ENCODE measurements at regions of chr12 and their contacts with region 1.

Region 1: GRCh38 chr12:6470375-6471163 is at the start of gene VAMP1:
- DNase-seq: peak; percentile 91 to 97
- H3K4me3 ChIP-seq: peak within 1 kb of the TSS; percentile 75 to 87 (median 86)
- H3K27ac ChIP-seq: peak within 1 kb of the TSS; percentile 67; the same call in 1 of the 2 replicates
- H3K4me1 ChIP-seq: peaks cover 3 to 7% (median 3%) of the 10 kb centered on the region in 4 experiments; a peak in 3 of 7 replicates
- H3K27me3 ChIP-seq: no peaks in the 10 kb centered on the region; a peak in 1 of 7 replicates
- CTCF ChIP-seq: no peak
- EP300 ChIP-seq: no peak
- POLR2A ChIP-seq: peak; percentile 99
- RAD21 ChIP-seq: no peak
- total RNA-seq, gene VAMP1: 9.3 and 10.8 TPM in 2 replicates

Region 2: DNA sequence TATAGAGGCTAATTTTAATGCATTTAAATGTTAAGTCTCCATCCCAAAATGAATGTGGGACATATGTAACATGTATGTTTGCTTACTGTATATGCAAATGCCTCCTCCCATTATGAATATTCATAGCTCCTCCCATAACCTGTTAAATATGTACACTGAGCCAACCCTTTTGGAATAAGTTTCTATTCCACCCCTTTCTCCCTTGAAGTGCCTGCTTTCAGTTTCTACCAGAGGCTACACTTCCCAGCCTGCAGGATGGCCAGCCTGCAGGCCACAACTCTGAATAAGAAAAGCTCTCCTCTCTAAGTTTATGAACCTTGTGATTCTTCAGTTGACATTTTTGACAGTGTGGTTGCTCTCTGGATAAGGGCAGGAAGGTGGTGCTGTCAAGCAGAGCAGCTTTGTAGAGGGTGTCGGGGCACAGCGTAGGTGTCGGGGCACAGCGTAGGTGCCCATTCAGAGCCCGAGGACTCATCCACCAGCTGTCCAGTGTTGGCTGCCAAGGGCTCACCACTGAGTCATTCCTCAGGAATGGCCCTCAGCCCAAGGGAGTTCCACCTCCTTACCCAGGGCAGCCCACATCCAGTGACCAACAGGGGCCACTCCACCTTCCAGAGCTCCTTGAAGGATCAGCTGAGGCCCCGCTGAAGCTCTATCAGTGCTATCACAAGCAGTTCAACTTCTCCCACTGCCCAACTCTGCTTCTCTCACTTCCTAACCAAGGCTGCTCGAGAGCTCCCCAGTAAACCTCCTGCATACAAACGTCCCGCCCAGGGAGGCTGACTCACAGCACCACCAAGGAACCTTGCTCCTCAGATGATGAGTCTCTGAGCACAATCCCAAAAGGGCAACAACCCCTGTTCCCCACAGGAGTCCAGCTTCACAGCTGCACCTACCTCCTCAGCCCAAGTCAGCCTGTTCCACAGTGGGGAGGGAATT is 377.5 kb before region 1 on chr12:
- CTCF ChIA-PET with region 1: no interaction called
- POLR2A ChIA-PET with region 1: no interaction called
- DNase-seq: no peak
- H3K4me3 ChIP-seq: no peak overlapping the region
- H3K27ac ChIP-seq: no peak overlapping the region
- H3K4me1 ChIP-seq: peaks cover 0 to 8% (median 2%) of the 10 kb centered on the region in 4 experiments; a peak in 4 of 7 replicates
- H3K27me3 ChIP-seq: peaks cover 0 to 3% (median 0%) of the 10 kb centered on the region in 4 experiments; a peak in 1 of 7 replicates
- CTCF ChIP-seq: no peak
- EP300 ChIP-seq: no peak
- POLR2A ChIP-seq: no peak
- RAD21 ChIP-seq: no peak

Region 3: GRCh38 chr12:6254491-6255157 is 215.9 kb before region 1 on chr12:
- CTCF ChIA-PET with region 1: no interaction called
- POLR2A ChIA-PET with region 1: no interaction called
- DNase-seq: no peak
- H3K4me3 ChIP-seq: no peak overlapping the region
- H3K27ac ChIP-seq: no peak overlapping the region
- H3K4me1 ChIP-seq: no peaks in the 10 kb centered on the region; a peak in 1 of 7 replicates
- H3K27me3 ChIP-seq: no peaks in the 10 kb centered on the region
- CTCF ChIP-seq: no peak
- EP300 ChIP-seq: no peak
- POLR2A ChIP-seq: no peak
- RAD21 ChIP-seq: no peak

Region 4: DNA sequence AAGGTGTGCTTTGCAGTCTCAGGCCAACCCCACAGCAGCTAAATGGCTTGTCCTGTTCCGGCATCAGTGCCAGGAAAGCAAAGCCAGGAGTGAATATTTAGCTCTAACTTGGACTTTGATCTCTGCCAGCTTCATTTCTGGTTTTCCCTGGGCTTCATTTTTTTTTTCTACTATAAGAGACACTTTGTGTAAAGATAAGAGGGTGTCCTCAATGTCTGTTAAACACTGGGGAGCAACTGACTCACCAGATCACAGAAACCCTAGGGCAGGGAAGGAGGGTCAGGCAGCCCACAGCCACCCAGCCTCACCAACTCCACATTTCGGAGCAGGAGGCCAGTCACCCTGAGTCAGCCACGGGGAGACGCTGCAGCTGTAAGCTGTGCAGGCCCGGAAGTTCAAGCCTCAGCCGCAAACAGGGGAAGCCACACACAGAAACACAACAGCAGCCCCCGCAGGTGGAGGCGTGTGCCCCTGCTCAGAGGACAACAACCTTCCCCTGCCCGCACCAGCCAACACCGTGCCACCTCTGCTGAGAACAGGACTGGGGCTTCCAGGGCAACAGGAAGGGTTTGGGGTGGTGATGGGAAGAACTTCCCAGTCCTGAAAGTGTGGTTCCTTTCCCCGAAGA is 135.0 kb before region 1 on chr12:
- CTCF ChIA-PET with region 1: interaction called, 107 read pairs
- POLR2A ChIA-PET with region 1: interaction called, 13 read pairs
- DNase-seq: peak in 1 of 2 experiments; percentile 70
- H3K4me3 ChIP-seq: peak overlapping the region in 3 of 4 experiments; percentile 5 to 51 (median 37); a peak in 4 of 8 replicates
- H3K27ac ChIP-seq: peak overlapping the region; percentile 88
- H3K4me1 ChIP-seq: peaks cover 19 to 48% (median 29%) of the 10 kb centered on the region in 4 experiments
- H3K27me3 ChIP-seq: no peaks in the 10 kb centered on the region
- CTCF ChIP-seq: peak in 2 of 3 experiments; percentile 48 to 53; a peak in 3 of 4 replicates
- EP300 ChIP-seq: no peak
- POLR2A ChIP-seq: no peak
- RAD21 ChIP-seq: peak; percentile 45 to 64

Region 5: DNA sequence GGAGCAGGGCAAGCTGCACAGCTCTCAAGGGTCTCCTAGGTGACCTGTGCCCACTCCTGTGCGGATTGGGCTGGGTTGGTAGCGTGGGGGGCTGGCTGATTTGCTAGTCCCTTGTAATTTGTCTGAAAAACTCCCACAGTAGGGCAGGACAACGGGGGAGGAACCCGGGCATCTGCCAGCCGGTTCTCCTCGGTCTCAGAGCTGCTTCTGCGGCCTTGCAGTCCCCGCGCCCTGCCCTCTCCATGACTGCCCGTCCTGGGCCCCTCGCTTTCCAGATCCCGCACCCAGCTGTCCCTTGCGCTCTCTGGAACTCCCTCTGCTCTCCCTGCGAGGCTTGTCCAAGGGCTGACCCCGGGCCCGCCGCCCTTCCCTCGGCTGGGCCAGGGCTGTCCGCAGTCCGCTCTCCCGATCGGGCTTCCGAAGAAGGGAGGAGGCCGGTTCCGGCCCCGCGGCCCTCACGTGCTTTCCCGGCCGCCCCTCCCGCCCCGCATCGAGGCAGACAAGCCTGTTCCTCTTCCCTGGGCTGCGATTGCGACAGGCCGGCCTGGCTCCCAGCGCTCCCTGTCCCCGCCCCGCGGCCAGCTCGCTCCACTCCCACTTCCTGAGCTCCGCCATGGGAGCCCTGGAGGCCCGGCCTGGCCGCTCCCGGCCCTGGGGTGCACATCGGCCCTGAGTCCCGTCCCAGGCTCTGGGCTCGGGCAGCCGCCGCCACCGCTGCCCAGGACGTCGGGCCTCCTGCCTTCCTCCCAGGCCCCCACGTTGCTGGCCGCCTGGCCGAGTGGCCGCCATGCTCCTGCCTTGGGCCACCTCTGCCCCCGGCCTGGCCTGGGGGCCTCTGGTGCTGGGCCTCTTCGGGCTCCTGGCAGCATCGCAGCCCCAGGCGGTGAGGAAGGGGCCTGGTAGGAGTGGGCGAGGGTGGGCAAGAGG is 86.7 kb before region 1 on chr12 and contains the start of gene LTBR:
- CTCF ChIA-PET with region 1: interaction called, 10 read pairs
- POLR2A ChIA-PET with region 1: interaction called, 8 read pairs
- DNase-seq: peak in 1 of 2 experiments; percentile 85
- H3K4me3 ChIP-seq: peak within 1 kb of the TSS in 1 of 4 experiments; percentile 37; a peak in 2 of 8 replicates
- H3K27ac ChIP-seq: no peak within 1 kb of the TSS
- H3K4me1 ChIP-seq: peaks cover 0 to 27% (median 20%) of the 10 kb centered on the region in 4 experiments; a peak in 6 of 7 replicates
- H3K27me3 ChIP-seq: peaks cover 0 to 26% (median 20%) of the 10 kb centered on the region in 4 experiments; a peak in 6 of 7 replicates
- CTCF ChIP-seq: 0 out of 4 replicates have a peak, but pooled peaks of 1 of the 3 experiments have one; percentile 3
- EP300 ChIP-seq: no peak
- POLR2A ChIP-seq: no peak; a peak in 1 of 3 replicates
- RAD21 ChIP-seq: peak in 1 of 2 experiments; percentile 11; a peak in 1 of 4 replicates
- total RNA-seq, gene LTBR: 6.3 and 6.7 TPM in 2 replicates

Region 6: GRCh38 chr12:6434205-6435140 is 36.1 kb before region 1 on chr12:
- CTCF ChIA-PET with region 1: interaction called, 33 read pairs
- POLR2A ChIA-PET with region 1: interaction called, 23 read pairs
- DNase-seq: no peak
- H3K4me3 ChIP-seq: no peak overlapping the region
- H3K27ac ChIP-seq: no peak overlapping the region
- H3K4me1 ChIP-seq: peaks cover 0 to 8% (median under 1%) of the 10 kb centered on the region in 4 experiments; a peak in 3 of 7 replicates
- H3K27me3 ChIP-seq: no peaks in the 10 kb centered on the region
- CTCF ChIP-seq: peak in 1 of 3 experiments; percentile 2; a peak in 1 of 4 replicates
- EP300 ChIP-seq: no peak
- POLR2A ChIP-seq: no peak
- RAD21 ChIP-seq: no peak

Region 7: DNA sequence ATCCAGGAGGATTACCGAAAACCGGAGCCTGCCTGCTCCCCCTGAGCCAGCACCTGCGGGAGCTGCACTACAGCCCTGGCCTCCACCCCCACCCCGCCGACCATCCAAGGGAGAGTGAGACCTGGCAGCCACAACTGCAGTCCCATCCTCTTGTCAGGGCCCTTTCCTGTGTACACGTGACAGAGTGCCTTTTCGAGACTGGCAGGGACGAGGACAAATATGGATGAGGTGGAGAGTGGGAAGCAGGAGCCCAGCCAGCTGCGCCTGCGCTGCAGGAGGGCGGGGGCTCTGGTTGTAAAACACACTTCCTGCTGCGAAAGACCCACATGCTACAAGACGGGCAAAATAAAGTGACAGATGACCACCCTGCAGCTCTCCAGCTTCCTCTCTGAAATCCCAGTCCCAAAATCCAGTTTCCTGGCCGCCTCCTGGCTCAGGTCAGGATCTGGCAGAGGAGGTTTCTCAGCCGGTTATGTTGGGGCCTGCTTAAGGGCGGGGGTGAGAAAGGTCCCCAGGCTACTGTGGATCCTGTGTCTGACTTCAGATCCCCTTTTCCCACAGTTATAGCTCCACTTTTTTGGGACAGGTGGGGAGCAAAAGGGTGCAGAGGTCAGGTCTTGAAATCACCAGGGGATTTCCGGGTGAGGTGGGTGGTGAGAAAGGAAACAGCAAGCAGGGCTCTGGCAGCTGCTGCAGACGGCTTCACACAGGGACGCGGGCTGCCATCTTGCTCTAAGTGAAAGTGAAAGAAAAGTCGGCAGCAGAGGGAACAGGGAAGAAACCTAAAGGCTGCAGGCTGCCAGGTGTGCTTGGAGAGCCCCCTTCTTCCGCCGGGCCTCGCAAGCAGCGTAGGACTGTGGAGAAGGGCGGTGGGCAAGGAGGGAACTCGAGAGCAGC is 19.0 kb before region 1 on chr12 and contains the start of gene TAPBPL:
- CTCF ChIA-PET with region 1: interaction called, 36 read pairs
- POLR2A ChIA-PET with region 1: interaction called, 78 read pairs
- DNase-seq: peak in 1 of 2 experiments; percentile 73
- H3K4me3 ChIP-seq: peak within 1 kb of the TSS in 3 of 4 experiments; percentile 7 to 42 (median 27); a peak in 4 of 8 replicates
- H3K27ac ChIP-seq: peak within 1 kb of the TSS; percentile 78
- H3K4me1 ChIP-seq: peaks cover 23 to 36% (median 31%) of the 10 kb centered on the region in 4 experiments
- H3K27me3 ChIP-seq: no peaks in the 10 kb centered on the region
- CTCF ChIP-seq: no peak
- EP300 ChIP-seq: no peak
- POLR2A ChIP-seq: no peak
- RAD21 ChIP-seq: no peak
- total RNA-seq, gene TAPBPL: 0.61 and 0.67 TPM in 2 replicates

Region 8: DNA sequence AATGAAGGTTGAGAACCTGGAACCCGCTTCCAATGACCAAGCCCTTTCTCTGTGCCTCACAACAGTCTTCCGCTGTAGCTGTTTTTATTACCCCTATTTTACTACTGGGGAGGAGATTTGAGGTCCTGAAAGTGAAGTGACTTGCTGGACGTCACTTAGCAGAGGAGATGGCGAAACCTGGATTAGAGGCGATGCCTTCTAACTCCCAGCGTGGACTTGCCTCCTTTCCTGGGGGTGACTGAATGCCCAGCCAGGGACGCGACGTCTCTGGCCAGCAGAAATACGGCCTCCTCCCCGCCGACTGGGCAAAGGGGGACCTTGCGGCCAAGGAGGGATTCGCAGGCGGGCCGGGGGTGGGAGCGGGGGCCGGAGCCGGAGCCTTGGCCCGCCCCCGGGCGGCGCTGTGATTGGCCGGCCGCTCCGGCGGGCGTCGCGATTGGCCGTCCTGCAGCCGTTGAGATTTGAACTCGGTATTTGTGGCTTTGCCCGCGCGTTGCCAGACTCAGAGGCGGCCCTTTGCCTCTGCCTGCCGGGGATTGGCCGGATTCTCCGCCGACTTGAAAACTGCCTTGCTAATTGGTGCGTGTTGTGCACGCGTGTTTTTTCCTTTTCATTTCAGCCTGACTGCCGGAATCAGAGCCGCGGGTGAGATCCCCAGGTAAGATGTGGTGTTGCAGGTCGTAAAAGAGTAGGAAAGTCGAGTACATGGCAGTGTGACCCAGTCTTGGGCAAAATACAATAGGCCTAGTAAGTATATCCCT is 23.1 kb after region 1 on chr12 and contains the start of gene NCAPD2:
- CTCF ChIA-PET with region 1: interaction called, 15 read pairs
- POLR2A ChIA-PET with region 1: interaction called, 39 read pairs
- DNase-seq: peak; percentile 86 to 91
- H3K4me3 ChIP-seq: peak within 1 kb of the TSS; percentile 84 to 98 (median 90)
- H3K27ac ChIP-seq: peak within 1 kb of the TSS; percentile 81
- H3K4me1 ChIP-seq: peaks cover 0 to 6% (median 4%) of the 10 kb centered on the region in 4 experiments; a peak in 4 of 7 replicates
- H3K27me3 ChIP-seq: no peaks in the 10 kb centered on the region
- CTCF ChIP-seq: peak in 2 of 3 experiments; percentile 12 to 19; a peak in 2 of 4 replicates
- EP300 ChIP-seq: no peak
- POLR2A ChIP-seq: peak; percentile 72 to 76
- RAD21 ChIP-seq: no peak; a peak in 1 of 4 replicates
- total RNA-seq, gene NCAPD2: 129 and 132 TPM in 2 replicates

Measured in H1 (cell line).